Naive thymus-derived CD4-positive, alpha-beta T cell (primary cell): ENCODE measurements at regions of chr5 and their contacts with region 1.

Region 1: GRCh38 chr5:141968914-141969608 is at the start of gene RNF14:
- DNase-seq: peak; percentile 90 to 96 (median 92)
- ATAC-seq: peak; percentile 97
- H3K4me3 ChIP-seq: peak within 1 kb of the TSS; percentile 69
- H3K4me3 Mint-ChIP-seq: peak within 1 kb of the TSS; percentile 88 to 97 (median 94)
- H3K27ac ChIP-seq: peak within 1 kb of the TSS; percentile 94
- H3K27ac Mint-ChIP-seq: peak within 1 kb of the TSS; percentile 92 to 98 (median 97)
- H3K4me1 ChIP-seq: peaks cover 13 to 18% of the 10 kb centered on the region in 2 donors
- H3K4me1 Mint-ChIP-seq: peaks cover 12 to 47% (median 40%) of the 10 kb centered on the region in 7 donors
- H3K27me3 ChIP-seq: no peaks in the 10 kb centered on the region
- H3K27me3 Mint-ChIP-seq: peaks cover 0 to 2% (median 0%) of the 10 kb centered on the region in 5 donors
- total RNA-seq, gene RNF14: 14.7 to 32.0 (median 24.8) TPM

Region 2: GRCh38 chr5:141618804-141619554 is 350.1 kb before region 1 on chr5 and contains the start of gene DIAPH1:
- CTCF ChIA-PET with region 1: no interaction called
- POLR2A ChIA-PET with region 1: no interaction called
- intact Hi-C with region 1: loop called in 1 of 2 experiments (anchors 1 kb)
- DNase-seq: peak; percentile 91 to 98 (median 96)
- ATAC-seq: peak; percentile 98
- H3K4me3 ChIP-seq: peak within 1 kb of the TSS; percentile 77
- H3K4me3 Mint-ChIP-seq: peak within 1 kb of the TSS; percentile 94 to 100 (median 100)
- H3K27ac ChIP-seq: peak within 1 kb of the TSS; percentile 97
- H3K27ac Mint-ChIP-seq: peak within 1 kb of the TSS; percentile 91 to 99 (median 95)
- H3K4me1 ChIP-seq: peaks cover 11 to 22% of the 10 kb centered on the region in 2 donors
- H3K4me1 Mint-ChIP-seq: peaks cover 44 to 61% (median 56%) of the 10 kb centered on the region in 7 donors
- H3K27me3 ChIP-seq: no peaks in the 10 kb centered on the region
- H3K27me3 Mint-ChIP-seq: no peaks in the 10 kb centered on the region
- total RNA-seq, gene DIAPH1: 163 to 278 (median 173) TPM

Region 3: DNA sequence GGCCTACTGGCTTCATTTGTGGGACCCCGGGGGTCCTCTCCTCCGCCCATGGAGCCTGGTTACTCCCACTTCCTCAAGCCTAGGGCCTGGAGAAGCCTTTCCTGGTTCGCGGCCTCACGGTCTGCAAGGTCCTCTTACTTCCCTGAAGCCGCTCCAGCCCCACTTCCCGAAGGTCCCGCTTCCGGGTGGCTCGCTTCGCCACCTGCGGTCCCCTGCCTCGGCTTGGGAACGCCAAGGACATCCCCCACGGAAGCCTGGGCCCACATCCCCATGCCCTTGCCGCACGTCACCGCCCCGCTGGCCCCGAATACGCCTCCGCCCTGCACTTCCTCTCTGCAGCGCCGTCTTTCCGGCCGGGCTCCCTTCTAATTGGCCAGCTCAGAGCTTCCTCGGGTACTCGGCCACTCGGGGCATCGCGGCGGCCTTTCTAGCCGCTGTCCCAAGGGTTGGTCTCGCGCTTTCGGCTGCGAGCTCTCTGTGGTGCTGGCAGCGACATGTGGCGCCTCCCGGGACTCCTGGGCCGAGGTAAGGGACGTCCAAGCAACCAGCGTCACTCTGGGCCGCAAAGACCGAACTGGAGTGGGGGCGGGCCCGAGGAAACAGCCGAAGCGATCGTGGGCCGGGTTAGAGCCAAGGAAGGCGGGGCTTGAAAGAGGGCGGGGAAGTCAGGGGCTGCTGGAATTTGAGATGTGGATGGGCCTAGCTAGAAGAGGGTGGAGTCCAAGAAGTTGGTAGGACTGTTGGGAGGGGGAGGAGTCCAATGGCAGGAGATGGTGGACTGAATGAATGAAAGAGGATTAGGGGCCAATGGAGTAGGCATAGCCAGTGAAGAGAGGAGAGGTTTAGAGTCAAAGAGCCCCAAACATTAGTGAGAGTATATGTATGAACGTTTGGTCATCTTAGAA is 45.4 kb before region 1 on chr5 and contains the start of gene DELE1:
- CTCF ChIA-PET with region 1: no interaction called
- POLR2A ChIA-PET with region 1: interaction called, 17 read pairs
- intact Hi-C with region 1: loop called (anchors 1 kb)
- DNase-seq: peak; percentile 79 to 92 (median 90)
- ATAC-seq: peak; percentile 97
- H3K4me3 ChIP-seq: peak within 1 kb of the TSS; percentile 81
- H3K4me3 Mint-ChIP-seq: peak within 1 kb of the TSS; percentile 88 to 98 (median 94)
- H3K27ac ChIP-seq: peak within 1 kb of the TSS; percentile 98
- H3K27ac Mint-ChIP-seq: peak within 1 kb of the TSS; percentile 87 to 99 (median 98)
- H3K4me1 ChIP-seq: peaks cover 10 to 14% of the 10 kb centered on the region in 2 donors
- H3K4me1 Mint-ChIP-seq: peaks cover 23 to 54% (median 36%) of the 10 kb centered on the region in 7 donors
- H3K27me3 ChIP-seq: no peaks in the 10 kb centered on the region
- H3K27me3 Mint-ChIP-seq: no peaks in the 10 kb centered on the region
- total RNA-seq, gene DELE1: 77.3 to 101 (median 88.2) TPM

Region 4: DNA sequence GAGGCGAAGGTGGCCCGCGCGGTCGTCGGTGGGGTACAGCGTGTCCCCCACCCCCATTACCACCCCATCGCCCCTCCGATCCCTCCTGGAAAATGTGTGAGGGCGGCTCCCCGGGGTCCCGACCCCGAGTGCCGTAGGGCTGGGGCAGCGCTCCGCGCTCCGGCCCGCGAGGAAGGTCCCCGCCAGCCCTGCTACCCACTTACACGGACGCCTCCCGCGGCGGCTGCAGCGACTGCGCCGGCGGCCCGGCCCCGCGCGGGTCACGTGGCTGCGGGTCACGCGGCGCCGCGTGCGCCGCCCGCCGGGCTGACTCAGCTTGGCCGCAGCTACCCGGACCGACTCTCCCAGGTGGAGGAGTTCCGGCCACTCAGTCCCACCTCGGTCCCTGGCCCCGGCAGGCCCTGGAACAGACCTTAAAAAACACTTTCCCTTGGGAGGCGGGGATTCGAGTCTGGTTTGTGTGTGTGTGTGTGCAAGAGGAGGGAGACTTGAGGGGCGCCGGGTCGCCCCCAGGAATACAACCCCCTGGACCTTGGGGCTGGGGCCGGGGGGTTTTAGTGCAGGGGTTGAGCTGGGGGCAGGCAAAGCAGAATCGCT is 43.8 kb after region 1 on chr5 and contains the start of gene GNPDA1:
- CTCF ChIA-PET with region 1: interaction called, 5 read pairs
- POLR2A ChIA-PET with region 1: interaction called, 6 read pairs
- intact Hi-C with region 1: loop called (anchors 1 kb)
- DNase-seq: peak; percentile 38 to 81 (median 54)
- ATAC-seq: peak; percentile 87
- H3K4me3 ChIP-seq: peak within 1 kb of the TSS; percentile 68
- H3K4me3 Mint-ChIP-seq: peak within 1 kb of the TSS; percentile 76 to 93 (median 88)
- H3K27ac ChIP-seq: peak within 1 kb of the TSS; percentile 76
- H3K27ac Mint-ChIP-seq: peak within 1 kb of the TSS; percentile 87 to 93 (median 90)
- H3K4me1 ChIP-seq: peaks cover 40 to 53% of the 10 kb centered on the region in 2 donors
- H3K4me1 Mint-ChIP-seq: peaks cover 34 to 86% (median 80%) of the 10 kb centered on the region in 7 donors
- H3K27me3 ChIP-seq: no peaks in the 10 kb centered on the region
- H3K27me3 Mint-ChIP-seq: no peaks in the 10 kb centered on the region
- total RNA-seq, gene GNPDA1: 13.3 to 60.4 (median 26.4) TPM

Region 5: GRCh38 chr5:142032747-142033631 is 63.9 kb after region 1 on chr5:
- CTCF ChIA-PET with region 1: no interaction called
- POLR2A ChIA-PET with region 1: no interaction called
- intact Hi-C with region 1: no loop called
- DNase-seq: no peak
- ATAC-seq: no peak
- H3K4me3 ChIP-seq: no peak overlapping the region
- H3K4me3 Mint-ChIP-seq: peak overlapping the region in 1 of 10 donors; percentile 43
- H3K27ac ChIP-seq: no peak overlapping the region
- H3K27ac Mint-ChIP-seq: peak overlapping the region in 6 of 9 donors; percentile 13 to 83 (median 69)
- H3K4me1 ChIP-seq: peaks cover 0 to 20% of the 10 kb centered on the region in 2 donors
- H3K4me1 Mint-ChIP-seq: peaks cover 8 to 32% (median 20%) of the 10 kb centered on the region in 7 donors
- H3K27me3 ChIP-seq: no peaks in the 10 kb centered on the region
- H3K27me3 Mint-ChIP-seq: no peaks in the 10 kb centered on the region

Region 6: DNA sequence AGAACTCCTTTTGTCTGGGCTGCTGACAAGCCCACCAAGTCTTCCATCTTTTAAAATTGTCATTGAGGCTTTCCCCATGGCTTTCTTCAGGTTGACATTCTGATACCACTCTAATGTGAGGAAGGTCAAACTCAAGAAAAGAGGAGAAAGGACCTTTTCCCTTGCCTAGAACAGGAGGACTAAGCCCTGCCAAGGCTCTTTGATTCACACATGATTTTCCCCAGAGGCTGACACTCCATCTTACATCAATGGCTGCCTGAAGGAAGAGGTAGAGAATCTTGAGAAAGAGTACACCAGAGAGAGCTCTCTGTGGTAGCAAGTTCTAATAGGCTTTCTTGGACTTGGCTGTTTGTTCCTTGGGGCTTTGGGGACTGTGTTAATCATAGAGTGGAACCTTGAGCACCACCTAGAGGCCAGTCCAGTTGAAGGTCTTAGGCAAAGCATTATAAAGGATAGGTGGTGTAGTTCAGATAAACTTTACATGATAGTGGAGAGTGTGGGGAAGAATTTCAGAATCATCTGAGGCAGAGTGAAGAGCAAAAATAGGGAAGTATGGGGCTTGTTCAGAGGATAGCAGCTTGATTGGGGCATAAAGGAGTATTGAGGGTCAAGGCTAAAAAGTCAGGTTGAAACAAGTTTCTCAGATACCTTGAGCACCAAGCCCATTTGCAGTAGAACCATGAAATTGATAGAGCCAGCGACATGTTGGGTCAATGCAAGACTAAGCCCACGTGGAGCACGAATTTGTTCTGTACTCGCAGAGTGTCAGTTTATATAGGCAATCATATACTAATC is 176.2 kb after region 1 on chr5:
- CTCF ChIA-PET with region 1: interaction called, 6 read pairs
- POLR2A ChIA-PET with region 1: interaction called, 4 read pairs
- intact Hi-C with region 1: loop called in 1 of 2 experiments (anchors 1 kb)
- DNase-seq: peak in 8 of 9 donors; percentile 38 to 67 (median 58)
- ATAC-seq: peak; percentile 89
- H3K4me3 ChIP-seq: no peak overlapping the region
- H3K4me3 Mint-ChIP-seq: no peak overlapping the region
- H3K27ac ChIP-seq: no peak overlapping the region
- H3K27ac Mint-ChIP-seq: no peak overlapping the region
- H3K4me1 ChIP-seq: no peaks in the 10 kb centered on the region
- H3K4me1 Mint-ChIP-seq: peaks cover 0 to 17% (median 5%) of the 10 kb centered on the region in 7 donors
- H3K27me3 ChIP-seq: no peaks in the 10 kb centered on the region
- H3K27me3 Mint-ChIP-seq: no peaks in the 10 kb centered on the region